ENCODE measurements at regions of chr2 and their contacts with region 1.

Region 1: GRCh38 chr2:47782671-47783485 is at the start of gene MSH6:
- DNase-seq: peak; percentile 91
- H3K4me3 Mint-ChIP-seq: peak within 1 kb of the TSS; percentile 89
- H3K27ac Mint-ChIP-seq: peak within 1 kb of the TSS; percentile 89
- H3K4me1 Mint-ChIP-seq: peaks cover 22% of the 10 kb centered on the region
- H3K27me3 Mint-ChIP-seq: no peaks in the 10 kb centered on the region
- total RNA-seq, gene MSH6: 131 to 140 TPM

Region 2: DNA sequence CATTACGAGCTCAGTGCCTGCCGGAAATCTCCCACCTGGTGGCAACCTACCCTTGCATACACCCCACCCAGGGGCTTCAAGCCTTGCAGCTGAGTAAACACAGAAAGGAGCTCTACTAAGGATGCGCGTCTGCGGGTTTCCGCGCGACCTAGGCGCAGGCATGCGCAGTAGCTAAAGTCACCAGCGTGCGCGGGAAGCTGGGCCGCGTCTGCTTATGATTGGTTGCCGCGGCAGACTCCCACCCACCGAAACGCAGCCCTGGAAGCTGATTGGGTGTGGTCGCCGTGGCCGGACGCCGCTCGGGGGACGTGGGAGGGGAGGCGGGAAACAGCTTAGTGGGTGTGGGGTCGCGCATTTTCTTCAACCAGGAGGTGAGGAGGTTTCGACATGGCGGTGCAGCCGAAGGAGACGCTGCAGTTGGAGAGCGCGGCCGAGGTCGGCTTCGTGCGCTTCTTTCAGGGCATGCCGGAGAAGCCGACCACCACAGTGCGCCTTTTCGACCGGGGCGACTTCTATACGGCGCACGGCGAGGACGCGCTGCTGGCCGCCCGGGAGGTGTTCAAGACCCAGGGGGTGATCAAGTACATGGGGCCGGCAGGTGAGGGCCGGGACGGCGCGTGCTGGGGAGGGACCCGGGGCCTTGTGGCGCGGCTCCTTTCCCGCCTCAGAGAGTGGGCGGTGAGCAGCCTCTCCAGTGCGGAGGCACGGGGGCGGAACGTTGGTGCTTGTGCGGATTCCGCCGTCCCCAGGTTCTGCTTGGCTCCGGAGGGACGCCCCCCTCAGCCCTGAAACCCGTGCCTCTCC is 379.9 kb before region 1 on chr2 and contains the start of gene MSH2:
- CTCF ChIA-PET with region 1: no interaction called
- POLR2A ChIA-PET with region 1: interaction called, 9 read pairs
- intact Hi-C with region 1: loop called (anchors 1 kb)
- DNase-seq: peak; percentile 96
- H3K4me3 Mint-ChIP-seq: peak within 1 kb of the TSS; percentile 96
- H3K27ac Mint-ChIP-seq: peak within 1 kb of the TSS; percentile 95
- H3K4me1 Mint-ChIP-seq: peaks cover 24% of the 10 kb centered on the region
- H3K27me3 Mint-ChIP-seq: no peaks in the 10 kb centered on the region
- total RNA-seq, gene MSH2: 57.0 to 59.1 TPM

Region 3: DNA sequence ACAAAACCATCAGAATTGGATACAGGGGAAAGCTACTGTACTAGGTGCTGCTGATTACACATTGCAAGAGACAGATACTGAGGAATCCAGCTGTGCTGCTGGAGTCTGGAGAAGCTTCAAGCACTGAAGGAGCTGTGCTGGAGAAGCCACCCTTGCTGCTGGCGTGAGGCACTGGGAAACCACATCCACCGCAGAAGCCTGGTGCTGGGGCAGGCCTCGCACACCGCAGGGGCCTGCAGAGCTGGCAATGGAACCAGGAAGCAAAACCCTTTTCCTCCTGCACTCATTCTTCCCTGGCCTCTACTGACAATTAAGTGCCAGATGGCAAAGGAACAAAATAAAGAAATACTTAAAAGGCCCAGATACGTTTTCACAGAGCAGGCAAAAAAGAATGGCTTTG is 94.3 kb before region 1 on chr2:
- CTCF ChIA-PET with region 1: no interaction called
- POLR2A ChIA-PET with region 1: no interaction called
- intact Hi-C with region 1: no loop called
- DNase-seq: peak; percentile 19
- H3K4me3 Mint-ChIP-seq: no peak overlapping the region
- H3K27ac Mint-ChIP-seq: no peak overlapping the region
- H3K4me1 Mint-ChIP-seq: peaks cover 8% of the 10 kb centered on the region
- H3K27me3 Mint-ChIP-seq: no peaks in the 10 kb centered on the region

Region 4: DNA sequence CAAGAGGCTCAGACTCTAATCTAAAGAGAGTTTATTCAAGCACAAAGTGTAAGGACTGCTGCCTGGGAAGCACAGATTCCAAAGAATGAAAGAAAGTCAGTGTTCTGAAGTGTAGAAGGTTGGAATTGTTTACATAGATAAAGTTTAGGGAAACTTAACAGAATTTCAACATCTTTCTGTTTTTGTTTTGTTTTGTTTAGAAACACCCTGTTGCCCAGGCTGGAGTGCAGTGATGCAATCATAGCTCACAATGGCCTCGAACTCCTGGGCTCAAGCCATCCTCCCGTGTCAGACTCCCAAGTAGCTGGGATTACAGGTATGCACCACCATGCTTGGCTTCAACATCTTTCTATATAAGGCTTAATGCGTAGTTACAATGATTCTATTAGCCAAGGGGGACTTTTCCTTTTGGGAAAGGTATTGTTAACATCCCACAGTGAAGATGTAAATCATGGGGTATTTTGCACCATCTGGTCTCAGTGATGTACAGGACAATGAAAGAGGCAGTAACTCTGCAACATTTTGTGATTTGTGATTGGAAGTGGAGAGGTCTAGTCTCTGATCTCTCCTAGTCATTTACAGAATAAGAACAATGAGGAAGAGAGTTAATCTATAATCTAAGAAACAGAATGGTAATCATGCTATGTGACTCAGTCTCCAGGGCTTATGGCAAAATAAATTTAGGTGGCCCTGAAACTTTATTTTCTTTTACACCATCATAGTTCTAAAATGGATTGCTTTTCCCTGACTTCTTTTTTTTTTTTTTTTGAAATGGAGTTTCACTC is 45.5 kb before region 1 on chr2:
- CTCF ChIA-PET with region 1: no interaction called
- POLR2A ChIA-PET with region 1: no interaction called
- intact Hi-C with region 1: no loop called
- DNase-seq: no peak
- H3K4me3 Mint-ChIP-seq: no peak overlapping the region
- H3K27ac Mint-ChIP-seq: no peak overlapping the region
- H3K4me1 Mint-ChIP-seq: peaks cover 5% of the 10 kb centered on the region
- H3K27me3 Mint-ChIP-seq: peaks cover 8% of the 10 kb centered on the region

Region 5: GRCh38 chr2:47751875-47752357 is 31.0 kb before region 1 on chr2:
- CTCF ChIA-PET with region 1: no interaction called
- POLR2A ChIA-PET with region 1: interaction called, 14 read pairs
- intact Hi-C with region 1: loop called (anchors 1 kb)
- DNase-seq: no peak
- H3K4me3 Mint-ChIP-seq: no peak overlapping the region
- H3K27ac Mint-ChIP-seq: peak overlapping the region; percentile 87
- H3K4me1 Mint-ChIP-seq: peaks cover 17% of the 10 kb centered on the region
- H3K27me3 Mint-ChIP-seq: no peaks in the 10 kb centered on the region

Region 6: DNA sequence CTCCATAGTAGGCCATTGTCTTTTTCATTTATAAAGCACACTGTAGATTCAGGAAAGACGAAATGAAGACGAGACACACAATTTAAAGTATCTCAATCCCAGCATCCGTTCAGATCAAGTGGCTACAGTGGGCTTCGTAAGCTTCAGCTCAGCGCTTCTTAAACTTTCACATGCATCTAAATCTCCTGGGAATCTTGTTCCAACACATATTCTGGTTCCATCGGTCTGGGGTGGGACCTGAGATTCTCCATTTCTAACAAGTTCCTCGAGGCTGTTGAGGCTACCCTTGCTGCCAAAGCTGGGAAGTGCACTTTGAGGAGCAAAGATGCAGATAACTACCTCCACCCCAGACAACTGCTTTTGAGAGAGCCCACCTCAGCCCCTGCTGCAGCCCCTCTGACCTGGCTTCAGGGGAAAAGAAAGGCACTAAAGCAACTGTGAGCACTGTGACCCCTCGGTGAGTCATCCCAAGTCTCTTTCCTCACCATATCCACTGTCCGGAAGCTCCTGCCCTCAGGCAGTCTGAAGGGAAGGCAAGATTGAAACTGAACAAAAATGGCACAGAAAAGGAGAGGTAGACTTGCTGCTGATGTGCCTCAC is 324.5 kb after region 1 on chr2:
- CTCF ChIA-PET with region 1: interaction called, 3 read pairs
- POLR2A ChIA-PET with region 1: no interaction called
- intact Hi-C with region 1: loop called (anchors 2 kb)
- DNase-seq: no peak
- H3K4me3 Mint-ChIP-seq: no peak overlapping the region
- H3K27ac Mint-ChIP-seq: no peak overlapping the region
- H3K4me1 Mint-ChIP-seq: peaks cover 26% of the 10 kb centered on the region
- H3K27me3 Mint-ChIP-seq: no peaks in the 10 kb centered on the region